A673 (cell line): ENCODE measurements at regions of chr1 and their contacts with region 1.

Region 1: DNA sequence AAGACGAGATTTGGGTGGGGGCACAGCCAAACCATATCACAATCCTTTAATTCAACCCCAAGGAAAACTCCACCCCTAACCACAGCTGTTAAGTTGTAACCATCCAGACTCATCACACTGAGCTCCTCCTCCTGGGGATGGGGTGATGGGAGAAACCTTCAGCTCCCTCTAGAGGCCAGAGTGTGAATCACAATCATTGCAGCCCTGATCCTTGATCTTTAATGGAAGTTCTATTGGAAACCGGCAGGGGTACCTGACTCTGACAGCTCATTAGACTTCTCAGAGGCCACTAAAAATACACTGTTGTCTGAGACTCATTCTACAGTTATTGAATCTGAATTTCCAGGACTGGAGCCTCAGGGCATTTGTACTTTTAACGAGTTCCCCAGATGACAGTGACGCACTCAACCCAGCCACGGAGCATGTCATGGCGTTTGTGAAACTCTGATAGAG is 127.2 kb downstream of the IGSF21 start:
- DNase-seq: peak; percentile 84
- H3K4me3 ChIP-seq: no peak overlapping the region
- H3K27ac ChIP-seq: no peak overlapping the region
- H3K4me1 ChIP-seq: no peaks in the 10 kb centered on the region
- H3K27me3 ChIP-seq: no peaks in the 10 kb centered on the region
- CTCF ChIP-seq: peak; percentile 85

Region 2: DNA sequence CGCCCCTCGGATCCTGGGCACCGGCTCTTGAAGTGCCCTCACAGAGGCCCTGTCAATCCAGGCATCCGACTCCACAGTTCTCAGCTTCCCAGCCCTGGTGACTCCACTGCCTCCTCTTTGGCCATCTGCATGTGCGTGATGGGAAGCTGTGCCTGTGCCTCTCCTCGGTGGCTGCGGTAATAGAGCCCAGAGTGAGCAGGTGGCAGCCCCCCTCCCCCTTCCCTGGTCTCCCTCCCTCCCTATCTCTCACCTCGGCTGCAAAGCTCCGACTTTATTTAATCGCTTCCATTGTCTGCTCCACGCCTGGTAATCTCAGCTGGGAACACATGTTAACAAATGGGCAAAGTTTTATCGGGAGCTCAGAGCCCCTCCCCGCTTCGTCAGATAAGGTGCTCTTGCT is 35.4 kb before region 1 on chr1:
- CTCF ChIA-PET with region 1: no interaction called
- POLR2A ChIA-PET with region 1: no interaction called
- intact Hi-C with region 1: no loop called
- DNase-seq: no peak
- H3K4me3 ChIP-seq: no peak overlapping the region
- H3K27ac ChIP-seq: no peak overlapping the region
- H3K4me1 ChIP-seq: no peaks in the 10 kb centered on the region
- H3K27me3 ChIP-seq: no peaks in the 10 kb centered on the region
- CTCF ChIP-seq: no peak

Region 3: GRCh38 chr1:18326211-18326897 is 91.5 kb after region 1 on chr1:
- CTCF ChIA-PET with region 1: interaction called, 19 read pairs
- POLR2A ChIA-PET with region 1: no interaction called
- intact Hi-C with region 1: no loop called
- DNase-seq: no peak
- H3K4me3 ChIP-seq: no peak overlapping the region
- H3K27ac ChIP-seq: no peak overlapping the region
- H3K4me1 ChIP-seq: peaks cover 29% of the 10 kb centered on the region
- H3K27me3 ChIP-seq: no peaks in the 10 kb centered on the region
- CTCF ChIP-seq: no peak

Region 4: DNA sequence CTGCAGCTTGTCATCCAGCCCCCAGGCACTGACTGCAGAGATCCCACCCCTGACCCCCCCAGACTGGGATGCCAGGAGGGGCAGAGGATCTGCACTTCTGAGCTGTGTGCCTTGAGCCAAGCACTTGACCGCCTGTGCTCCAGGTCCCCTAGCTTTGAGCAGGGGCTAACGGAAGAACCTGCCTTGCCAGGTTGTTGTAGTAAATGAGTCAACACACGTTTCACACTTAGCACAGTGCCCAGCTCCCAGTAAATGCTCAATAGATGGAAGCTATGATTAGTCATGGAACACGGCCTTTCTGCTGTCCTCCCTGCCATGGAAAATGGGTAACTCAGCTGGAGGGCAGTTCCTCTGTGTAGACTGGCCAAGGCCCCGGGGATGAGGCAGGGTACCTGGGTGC is 697.6 kb after region 1 on chr1:
- CTCF ChIA-PET with region 1: interaction called, 19 read pairs
- POLR2A ChIA-PET with region 1: no interaction called
- intact Hi-C with region 1: no loop called
- DNase-seq: no peak
- H3K4me3 ChIP-seq: no peak overlapping the region
- H3K27ac ChIP-seq: no peak overlapping the region
- H3K4me1 ChIP-seq: peaks cover 12% of the 10 kb centered on the region
- H3K27me3 ChIP-seq: no peaks in the 10 kb centered on the region
- CTCF ChIP-seq: no peak